ENCODE measurements at regions of chr5 and their contacts with region 1.

Region 1: GRCh38 chr5:88883059-88883835 is at the start of gene MEF2C:
- DNase-seq: peak; percentile 62
- ATAC-seq: peak; percentile 57
- H3K4me3 Mint-ChIP-seq: peak within 1 kb of the TSS; percentile 99
- H3K27ac Mint-ChIP-seq: peak within 1 kb of the TSS; percentile 98
- H3K4me1 Mint-ChIP-seq: peaks cover 46% of the 10 kb centered on the region
- H3K27me3 Mint-ChIP-seq: no peaks in the 10 kb centered on the region
- CTCF ChIP-seq: no peak
- total RNA-seq, gene MEF2C: 348 and 359 TPM in 2 replicates

Region 2: GRCh38 chr5:87780831-87781760 is 1102.2 kb before region 1 on chr5:
- CTCF ChIA-PET with region 1: no interaction called
- POLR2A ChIA-PET with region 1: no interaction called
- intact Hi-C with region 1: loop called (anchors 10 kb)
- DNase-seq: peak; percentile 49
- ATAC-seq: peak; percentile 99
- H3K4me3 Mint-ChIP-seq: no peak overlapping the region
- H3K27ac Mint-ChIP-seq: no peak overlapping the region
- H3K4me1 Mint-ChIP-seq: peaks cover 2% of the 10 kb centered on the region
- H3K27me3 Mint-ChIP-seq: peaks cover 15% of the 10 kb centered on the region
- CTCF ChIP-seq: peak; percentile 86

Region 3: DNA sequence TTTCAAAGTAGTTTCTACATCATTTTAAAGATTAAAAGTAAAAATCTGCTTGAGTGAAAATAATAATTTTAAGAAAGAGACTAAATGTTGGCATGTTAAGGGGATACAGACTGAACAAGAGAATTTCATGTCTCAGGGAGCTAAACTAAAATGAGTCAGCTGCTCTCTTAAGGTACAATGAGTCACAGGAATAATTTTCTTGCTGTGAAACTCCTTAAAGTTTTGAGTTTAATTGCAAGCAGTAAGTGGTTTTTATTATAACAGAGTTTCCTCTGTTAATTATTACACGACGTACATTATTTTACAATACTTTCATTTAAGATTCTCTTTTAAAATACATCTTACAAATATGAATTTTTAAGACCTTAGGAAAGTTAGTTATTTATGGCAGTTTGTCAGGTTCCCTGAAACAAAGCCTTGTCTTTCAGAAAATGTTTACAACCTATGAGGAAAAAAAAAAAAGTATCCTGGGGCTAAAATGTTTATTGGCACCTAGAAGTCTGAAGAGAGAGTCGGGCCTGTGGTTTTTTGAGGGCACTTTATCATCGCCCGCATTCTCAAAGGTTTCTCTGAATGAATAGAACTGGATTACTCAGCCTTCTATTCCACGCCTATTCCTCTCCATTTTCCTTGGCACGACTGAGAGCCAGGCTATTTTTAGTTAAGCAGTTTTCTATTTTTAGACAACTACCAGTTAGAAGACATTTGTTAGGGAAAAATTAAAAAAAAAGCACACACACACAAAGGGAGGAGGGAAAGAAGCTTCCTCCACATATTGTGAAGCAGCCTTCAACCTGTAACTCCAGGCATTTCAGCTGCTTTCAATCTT is 97.6 kb before region 1 on chr5:
- CTCF ChIA-PET with region 1: interaction called, 3 read pairs
- POLR2A ChIA-PET with region 1: interaction called, 10 read pairs
- intact Hi-C with region 1: no loop called
- DNase-seq: no peak
- ATAC-seq: peak; percentile 52
- H3K4me3 Mint-ChIP-seq: peak overlapping the region; percentile 69
- H3K27ac Mint-ChIP-seq: peak overlapping the region; percentile 86
- H3K4me1 Mint-ChIP-seq: peaks cover 66% of the 10 kb centered on the region
- H3K27me3 Mint-ChIP-seq: no peaks in the 10 kb centered on the region
- CTCF ChIP-seq: no peak

Region 4: GRCh38 chr5:88845081-88845697 is 38.1 kb before region 1 on chr5:
- CTCF ChIA-PET with region 1: no interaction called
- POLR2A ChIA-PET with region 1: interaction called, 48 read pairs
- intact Hi-C with region 1: loop called (anchors 1 kb)
- DNase-seq: no peak
- ATAC-seq: peak; percentile 79
- H3K4me3 Mint-ChIP-seq: peak overlapping the region; percentile 71
- H3K27ac Mint-ChIP-seq: peak overlapping the region; percentile 89
- H3K4me1 Mint-ChIP-seq: peaks cover 75% of the 10 kb centered on the region
- H3K27me3 Mint-ChIP-seq: no peaks in the 10 kb centered on the region
- CTCF ChIP-seq: no peak

Region 5: DNA sequence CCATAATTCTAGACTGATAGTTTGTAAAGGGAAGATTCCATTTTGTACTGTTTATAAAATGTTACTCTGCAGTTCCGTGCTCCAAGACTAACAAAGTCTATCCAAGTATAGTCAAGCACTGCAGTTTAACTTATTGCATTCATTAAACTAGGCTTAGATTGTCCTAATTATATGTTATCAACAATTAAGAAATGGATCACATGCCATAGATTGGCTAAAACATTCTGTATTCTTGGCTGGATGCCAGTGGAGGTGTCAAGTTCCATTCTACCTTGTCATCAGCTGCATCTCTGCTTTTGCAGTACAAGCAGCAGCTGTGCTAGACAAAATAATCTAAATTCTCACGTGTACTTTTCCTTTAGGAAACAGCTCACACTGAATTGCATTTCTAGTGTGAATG is 69.1 kb after region 1 on chr5:
- CTCF ChIA-PET with region 1: no interaction called
- POLR2A ChIA-PET with region 1: no interaction called
- intact Hi-C with region 1: no loop called
- DNase-seq: no peak
- ATAC-seq: no peak
- H3K4me3 Mint-ChIP-seq: no peak overlapping the region
- H3K27ac Mint-ChIP-seq: no peak overlapping the region
- H3K4me1 Mint-ChIP-seq: peaks cover 21% of the 10 kb centered on the region
- H3K27me3 Mint-ChIP-seq: no peaks in the 10 kb centered on the region
- CTCF ChIP-seq: no peak

Region 6: GRCh38 chr5:89313804-89314588 is 430.7 kb after region 1 on chr5:
- CTCF ChIA-PET with region 1: no interaction called
- POLR2A ChIA-PET with region 1: interaction called, 37 read pairs
- intact Hi-C with region 1: loop called (anchors 5 kb)
- DNase-seq: no peak
- ATAC-seq: peak; percentile 94
- H3K4me3 Mint-ChIP-seq: peak overlapping the region; percentile 66
- H3K27ac Mint-ChIP-seq: peak overlapping the region; percentile 96
- H3K4me1 Mint-ChIP-seq: peaks cover 48% of the 10 kb centered on the region
- H3K27me3 Mint-ChIP-seq: no peaks in the 10 kb centered on the region
- CTCF ChIP-seq: no peak

Region 7: DNA sequence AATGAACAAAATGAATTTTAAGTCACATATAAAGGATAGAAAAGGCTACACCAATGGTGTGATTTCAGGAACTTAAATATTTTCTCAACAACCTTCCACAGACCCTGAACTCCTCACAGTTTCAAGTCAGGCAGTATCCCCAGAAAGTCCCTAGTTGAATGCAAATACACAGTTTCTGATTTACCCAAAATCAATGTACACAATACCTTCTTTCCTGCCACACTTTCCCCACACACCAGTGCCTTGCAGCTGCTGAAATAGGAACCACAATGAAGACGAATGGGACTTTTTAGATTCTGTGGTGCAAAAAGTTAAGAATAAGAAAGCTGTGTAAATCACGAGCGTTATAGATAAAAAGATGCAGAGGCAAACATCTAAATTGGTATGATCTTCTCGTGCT is 552.1 kb after region 1 on chr5:
- CTCF ChIA-PET with region 1: no interaction called
- POLR2A ChIA-PET with region 1: interaction called, 5 read pairs
- intact Hi-C with region 1: loop called (anchors 5 kb)
- DNase-seq: no peak
- ATAC-seq: peak; percentile 85
- H3K4me3 Mint-ChIP-seq: peak overlapping the region; percentile 52
- H3K27ac Mint-ChIP-seq: peak overlapping the region; percentile 86
- H3K4me1 Mint-ChIP-seq: peaks cover 73% of the 10 kb centered on the region
- H3K27me3 Mint-ChIP-seq: no peaks in the 10 kb centered on the region
- CTCF ChIP-seq: no peak

Region 8: DNA sequence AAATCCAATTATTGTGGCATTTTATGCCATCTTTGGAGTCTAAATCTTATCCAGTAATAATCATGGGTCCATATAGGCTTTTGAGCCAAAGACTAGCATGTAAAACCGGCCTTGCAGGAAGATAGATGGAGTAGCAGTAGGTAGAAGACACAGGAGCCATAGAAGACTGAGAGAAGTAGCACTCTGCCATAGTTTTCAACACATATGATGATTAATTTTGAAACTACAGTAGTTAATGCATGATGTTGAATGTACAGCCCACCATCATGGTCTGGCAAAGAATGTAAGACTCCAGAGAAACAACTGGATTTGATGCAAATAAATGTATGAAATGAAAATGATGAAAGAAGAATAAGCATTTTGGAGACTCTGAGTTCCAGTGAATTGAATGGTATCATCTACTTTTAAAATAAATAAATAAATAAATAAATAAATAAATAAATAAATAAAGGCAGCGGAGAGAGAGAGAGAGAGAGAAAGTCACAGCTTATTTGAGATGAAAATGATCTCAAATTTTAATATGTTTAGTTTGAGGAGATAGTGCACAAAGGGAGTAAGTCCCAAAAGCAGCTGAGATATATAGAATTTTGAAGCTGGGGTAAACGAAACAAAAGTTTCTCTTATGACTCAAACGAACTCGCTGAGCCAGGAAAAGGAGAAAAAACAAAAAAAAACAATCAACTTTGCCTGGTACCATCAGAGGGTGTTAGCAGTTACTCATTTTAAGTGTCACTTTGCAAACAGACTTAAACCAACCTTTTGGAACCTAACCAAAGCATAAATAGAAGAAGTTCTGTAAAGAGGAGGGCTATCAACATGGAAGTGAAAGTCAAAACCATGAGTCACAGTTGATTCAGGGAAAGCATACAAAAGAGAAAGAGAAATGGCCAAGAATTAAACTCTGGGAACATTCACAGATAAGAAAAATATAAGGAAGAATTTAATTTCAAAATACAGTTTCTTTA is 1137.6 kb after region 1 on chr5:
- CTCF ChIA-PET with region 1: no interaction called
- POLR2A ChIA-PET with region 1: no interaction called
- intact Hi-C with region 1: loop called (anchors 2 kb)
- DNase-seq: no peak
- ATAC-seq: peak; percentile 95
- H3K4me3 Mint-ChIP-seq: peak overlapping the region; percentile 24
- H3K27ac Mint-ChIP-seq: peak overlapping the region; percentile 27
- H3K4me1 Mint-ChIP-seq: peaks cover 15% of the 10 kb centered on the region
- H3K27me3 Mint-ChIP-seq: no peaks in the 10 kb centered on the region
- CTCF ChIP-seq: no peak